Breast epithelium (tissue), 4 donors: ENCODE measurements at regions of chr18 and their contacts with region 1.

Region 1: GRCh38 chr18:24968238-24968775 is 383.7 kb downstream of the ZNF521 start:
- DNase-seq: no peak
- H3K4me3 ChIP-seq: no peak overlapping the region
- H3K27ac ChIP-seq: no peak overlapping the region
- H3K4me1 ChIP-seq: no peaks in the 10 kb centered on the region
- H3K27me3 ChIP-seq: no peaks in the 10 kb centered on the region
- CTCF ChIP-seq: no peak
- POLR2A ChIP-seq: no peak

Region 2: GRCh38 chr18:24246143-24246542 is 722.2 kb before region 1 on chr18:
- intact Hi-C with region 1: no loop called
- DNase-seq: no peak
- H3K4me3 ChIP-seq: no peak overlapping the region
- H3K27ac ChIP-seq: no peak overlapping the region
- H3K4me1 ChIP-seq: no peaks in the 10 kb centered on the region
- H3K27me3 ChIP-seq: no peaks in the 10 kb centered on the region
- CTCF ChIP-seq: no peak
- POLR2A ChIP-seq: no peak

Region 3: DNA sequence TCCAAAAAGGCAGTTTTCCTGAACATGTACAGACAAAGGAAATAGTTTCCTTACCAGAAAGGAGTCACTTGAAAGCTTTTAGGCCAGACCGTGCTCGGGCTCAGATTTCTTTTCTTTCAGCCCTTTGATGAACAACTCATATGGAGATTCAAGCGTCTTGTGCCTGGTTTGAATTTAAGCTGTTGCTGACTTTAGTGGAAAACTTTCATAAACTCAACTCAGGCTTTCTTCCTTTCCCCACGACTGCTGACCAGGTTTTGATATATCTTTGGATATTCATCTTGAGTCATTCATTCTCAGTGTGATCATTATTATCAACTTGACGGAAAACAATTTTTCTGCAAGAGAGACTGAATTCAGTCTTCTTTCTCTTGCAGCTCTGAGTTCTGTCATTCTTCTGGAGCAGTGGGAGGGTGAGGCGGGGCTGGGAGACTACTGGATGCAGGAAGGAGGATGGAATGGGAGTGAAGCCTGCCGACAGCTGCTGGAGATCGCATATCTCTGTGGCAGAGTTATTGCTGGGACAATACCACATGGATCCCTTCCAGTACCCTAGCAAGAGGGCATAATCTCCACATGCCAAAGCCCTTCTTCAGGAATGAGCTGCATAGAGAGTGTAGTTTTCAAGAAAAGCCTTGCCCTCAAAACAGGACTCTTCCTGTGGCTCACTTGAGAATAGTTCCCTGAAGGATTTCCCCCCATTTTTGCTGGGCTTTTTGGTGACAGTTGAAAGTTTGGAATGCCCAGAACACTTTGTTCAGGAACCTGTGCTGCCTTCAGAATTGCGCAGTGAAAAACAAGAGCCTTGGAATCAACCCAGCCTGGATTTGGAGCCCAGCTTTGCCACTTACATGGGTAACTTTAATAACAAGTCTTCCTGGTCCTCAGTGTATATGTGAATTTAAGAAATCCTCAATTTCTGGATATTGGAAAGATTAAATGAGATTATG is 19.3 kb after region 1 on chr18:
- intact Hi-C with region 1: no loop called
- DNase-seq: peak in 1 of 2 donors; percentile 61
- H3K4me3 ChIP-seq: peak overlapping the region; percentile 7 to 51 (median 10)
- H3K27ac ChIP-seq: peak overlapping the region; percentile 69 to 90
- H3K4me1 ChIP-seq: peaks cover 0 to 3% of the 10 kb centered on the region in 2 donors
- H3K27me3 ChIP-seq: no peaks in the 10 kb centered on the region
- CTCF ChIP-seq: no peak
- POLR2A ChIP-seq: no peak

Region 4: GRCh38 chr18:25453556-25454269 is 485.4 kb after region 1 on chr18:
- intact Hi-C with region 1: loop called (anchors 5 kb)
- DNase-seq: peak in 1 of 2 donors; percentile 32
- H3K4me3 ChIP-seq: no peak overlapping the region
- H3K27ac ChIP-seq: no peak overlapping the region
- H3K4me1 ChIP-seq: no peaks in the 10 kb centered on the region
- H3K27me3 ChIP-seq: no peaks in the 10 kb centered on the region
- CTCF ChIP-seq: no peak
- POLR2A ChIP-seq: no peak